Activated naive CD4-positive, alpha-beta T cell treated with anti-CD3 and anti-CD28 coated beads for 36 hours (primary cell): ENCODE measurements at regions of chr1 and their contacts with region 1.

Region 1: GRCh38 chr1:170461762-170462384 is 70.1 kb upstream of the GORAB start:
- DNase-seq: no peak
- H3K4me3 Mint-ChIP-seq: no peak overlapping the region
- H3K27ac Mint-ChIP-seq: no peak overlapping the region
- H3K4me1 Mint-ChIP-seq: peaks cover 2% of the 10 kb centered on the region
- H3K27me3 Mint-ChIP-seq: peaks cover 27% of the 10 kb centered on the region

Region 2: DNA sequence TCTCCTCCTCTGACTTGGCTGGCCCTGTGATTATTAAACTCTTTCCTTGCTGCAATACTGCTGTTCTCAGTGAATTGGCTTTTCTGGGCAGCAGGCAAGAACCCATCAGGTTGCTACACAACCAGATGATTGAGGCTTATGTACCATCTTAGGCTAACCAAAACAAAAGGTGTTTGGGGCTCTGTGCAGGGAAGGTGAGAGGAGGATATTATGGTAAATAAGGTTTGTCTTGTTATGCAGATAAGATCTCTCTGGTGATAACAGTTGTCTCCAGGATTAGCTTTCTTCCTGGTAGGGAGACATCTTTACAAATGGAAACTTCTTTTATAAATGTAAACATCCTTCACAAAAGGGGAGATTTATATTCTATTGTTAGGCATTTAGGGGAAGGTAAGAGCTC is 25.6 kb after region 1 on chr1:
- CTCF ChIA-PET with region 1: no interaction called
- intact Hi-C with region 1: no loop called
- DNase-seq: no peak
- H3K4me3 Mint-ChIP-seq: no peak overlapping the region
- H3K27ac Mint-ChIP-seq: no peak overlapping the region
- H3K4me1 Mint-ChIP-seq: no peaks in the 10 kb centered on the region
- H3K27me3 Mint-ChIP-seq: peaks cover 22% of the 10 kb centered on the region

Region 3: GRCh38 chr1:170593173-170594011 is 131.5 kb after region 1 on chr1:
- CTCF ChIA-PET with region 1: no interaction called
- intact Hi-C with region 1: loop called (anchors 10 kb)
- DNase-seq: no peak
- H3K4me3 Mint-ChIP-seq: no peak overlapping the region
- H3K27ac Mint-ChIP-seq: no peak overlapping the region
- H3K4me1 Mint-ChIP-seq: no peaks in the 10 kb centered on the region
- H3K27me3 Mint-ChIP-seq: peaks cover 29% of the 10 kb centered on the region